ENCODE measurements at regions of chr1 and their contacts with region 1.

Region 1: GRCh38 chr1:61724813-61725694 is at the start of gene TM2D1:
- H3K4me3 ChIP-seq: peak within 1 kb of the TSS; percentile 66
- H3K27ac ChIP-seq: peak within 1 kb of the TSS; percentile 81
- H3K4me1 ChIP-seq: no peaks in the 10 kb centered on the region
- CTCF ChIP-seq: no peak; the same call in 1 of the 2 replicates

Region 2: GRCh38 chr1:59926381-59927123 is 1798.5 kb before region 1 on chr1 and contains the start of gene CYP2J2:
- CTCF ChIA-PET with region 1: no interaction called
- POLR2A ChIA-PET with region 1: interaction called, 11 read pairs
- H3K4me3 ChIP-seq: peak within 1 kb of the TSS; percentile 54
- H3K27ac ChIP-seq: no peak within 1 kb of the TSS; the same call in 1 of the 2 replicates
- H3K4me1 ChIP-seq: peaks cover 3% of the 10 kb centered on the region; the same call in 1 of the 2 replicates
- CTCF ChIP-seq: no peak

Region 3: DNA sequence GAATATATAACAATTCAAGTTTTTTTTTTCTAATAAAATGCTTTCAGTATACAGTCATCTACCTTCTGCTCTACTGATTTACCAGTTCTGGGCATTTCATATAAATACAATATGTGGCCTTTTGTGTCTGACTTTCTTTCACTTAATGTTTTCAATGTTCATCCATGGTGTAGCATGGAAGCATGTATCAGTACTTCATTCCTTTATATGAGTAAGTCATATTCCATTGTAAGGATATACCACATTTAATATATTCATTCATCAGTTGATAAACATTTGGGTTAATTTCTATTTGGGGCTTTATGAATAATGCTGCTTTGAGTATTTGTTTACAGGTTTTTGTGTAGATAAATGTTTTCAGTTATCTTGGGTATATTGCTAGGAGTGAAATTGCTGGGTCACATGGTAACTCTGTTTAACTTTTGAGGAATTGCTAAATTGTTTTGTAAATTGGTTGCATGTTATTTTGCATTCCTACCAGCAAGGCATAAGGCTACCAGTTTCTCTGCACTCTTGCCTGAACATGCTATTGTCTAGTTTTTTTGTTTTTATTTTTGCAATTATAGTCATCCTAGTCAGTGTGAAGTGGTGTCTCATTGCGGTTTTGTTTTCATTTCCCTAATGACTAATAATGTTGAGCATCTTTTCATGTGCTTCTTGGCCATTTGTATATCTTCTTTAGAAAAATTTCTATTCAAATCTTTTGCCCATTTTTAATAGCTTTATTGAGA is 206.2 kb before region 1 on chr1:
- CTCF ChIA-PET with region 1: no interaction called
- POLR2A ChIA-PET with region 1: no interaction called
- H3K4me3 ChIP-seq: no peak overlapping the region
- H3K27ac ChIP-seq: no peak overlapping the region
- H3K4me1 ChIP-seq: no peaks in the 10 kb centered on the region
- CTCF ChIP-seq: no peak

Region 4: GRCh38 chr1:61692155-61692800 is 32.8 kb before region 1 on chr1:
- CTCF ChIA-PET with region 1: no interaction called
- POLR2A ChIA-PET with region 1: no interaction called
- H3K4me3 ChIP-seq: no peak overlapping the region
- H3K27ac ChIP-seq: no peak overlapping the region
- H3K4me1 ChIP-seq: peaks cover 6% of the 10 kb centered on the region; the same call in 1 of the 2 replicates
- CTCF ChIP-seq: no peak

Region 5: GRCh38 chr1:61740751-61741700 is 16.0 kb after region 1 on chr1:
- CTCF ChIA-PET with region 1: interaction called, 3 read pairs
- POLR2A ChIA-PET with region 1: interaction called, 10 read pairs
- H3K4me3 ChIP-seq: peak overlapping the region; percentile 81
- H3K27ac ChIP-seq: peak overlapping the region; percentile 92; the same call in 1 of the 2 replicates
- H3K4me1 ChIP-seq: peaks cover 6% of the 10 kb centered on the region
- CTCF ChIP-seq: no peak

Region 6: GRCh38 chr1:61904354-61904753 is 179.3 kb after region 1 on chr1:
- CTCF ChIA-PET with region 1: no interaction called
- POLR2A ChIA-PET with region 1: no interaction called
- H3K4me3 ChIP-seq: no peak overlapping the region
- H3K27ac ChIP-seq: no peak overlapping the region
- H3K4me1 ChIP-seq: no peaks in the 10 kb centered on the region
- CTCF ChIP-seq: no peak

Measured in HEK293 (cell line).